ENCODE measurements at regions of chr9 and their contacts with region 1.

Region 1: GRCh38 chr9:75120686-75121085 is 32.4 kb downstream of the OSTF1 start:
- H3K4me3 Mint-ChIP-seq: no peak overlapping the region
- H3K27ac Mint-ChIP-seq: peak overlapping the region; percentile 60
- H3K4me1 Mint-ChIP-seq: peaks cover 64% of the 10 kb centered on the region
- H3K27me3 Mint-ChIP-seq: no peaks in the 10 kb centered on the region

Region 2: DNA sequence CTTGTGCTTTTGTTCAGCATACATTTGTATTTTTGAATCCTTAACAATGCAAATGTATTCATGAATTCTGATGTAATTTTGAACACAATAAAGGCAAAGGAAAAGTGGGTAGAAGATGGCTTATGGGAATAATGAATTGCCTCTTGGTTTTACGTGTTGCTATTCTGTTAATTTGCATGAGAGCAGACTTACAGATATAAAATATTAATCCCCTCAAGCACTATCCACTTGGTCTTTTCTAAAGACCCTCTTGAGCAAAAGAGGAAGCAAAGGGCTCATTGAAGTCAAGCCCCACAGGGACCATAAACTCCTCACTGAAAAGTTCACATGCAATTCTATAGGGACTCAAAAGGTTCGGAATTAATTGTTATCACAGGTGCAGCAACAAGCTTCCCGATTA is 19.6 kb after region 1 on chr9:
- intact Hi-C with region 1: loop called (anchors 2 kb)
- H3K4me3 Mint-ChIP-seq: no peak overlapping the region
- H3K27ac Mint-ChIP-seq: no peak overlapping the region
- H3K4me1 Mint-ChIP-seq: peaks cover 41% of the 10 kb centered on the region
- H3K27me3 Mint-ChIP-seq: no peaks in the 10 kb centered on the region

Region 3: DNA sequence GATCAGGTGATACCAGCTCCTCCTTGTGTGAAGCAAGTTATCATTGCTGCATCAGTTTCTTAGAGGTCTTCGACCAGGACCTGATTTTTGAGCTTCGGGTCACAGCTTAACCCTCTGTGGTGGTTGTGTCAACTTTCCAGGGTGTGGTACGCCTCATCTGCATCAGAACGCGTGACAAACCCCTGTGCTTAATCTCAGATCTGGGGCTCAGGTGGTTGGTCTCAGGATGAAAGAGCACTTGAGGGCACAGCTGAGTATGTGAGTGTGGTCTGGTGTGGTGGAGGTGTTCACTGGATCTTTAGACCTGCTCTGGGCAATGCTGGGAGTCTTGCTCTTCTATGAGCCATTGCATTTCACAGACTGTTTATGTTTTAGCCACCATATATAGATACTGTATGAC is 31.7 kb after region 1 on chr9:
- intact Hi-C with region 1: no loop called
- H3K4me3 Mint-ChIP-seq: no peak overlapping the region
- H3K27ac Mint-ChIP-seq: no peak overlapping the region
- H3K4me1 Mint-ChIP-seq: peaks cover 32% of the 10 kb centered on the region
- H3K27me3 Mint-ChIP-seq: no peaks in the 10 kb centered on the region

Region 4: GRCh38 chr9:75185585-75186170 is 65.0 kb after region 1 on chr9:
- intact Hi-C with region 1: loop called (anchors 5 kb)
- H3K4me3 Mint-ChIP-seq: no peak overlapping the region
- H3K27ac Mint-ChIP-seq: no peak overlapping the region
- H3K4me1 Mint-ChIP-seq: peaks cover 6% of the 10 kb centered on the region
- H3K27me3 Mint-ChIP-seq: no peaks in the 10 kb centered on the region